ENCODE measurements at regions of chr22 and their contacts with region 1.

Region 1: GRCh38 chr22:48442663-48443062 is 1385.0 kb downstream of the BRD1 start:
- DNase-seq: no peak
- ATAC-seq: no peak
- H3K4me3 ChIP-seq: no peak overlapping the region
- H3K27ac ChIP-seq: no peak overlapping the region
- H3K4me1 ChIP-seq: no peaks in the 10 kb centered on the region
- H3K27me3 ChIP-seq: no peaks in the 10 kb centered on the region
- CTCF ChIP-seq: no peak

Region 2: DNA sequence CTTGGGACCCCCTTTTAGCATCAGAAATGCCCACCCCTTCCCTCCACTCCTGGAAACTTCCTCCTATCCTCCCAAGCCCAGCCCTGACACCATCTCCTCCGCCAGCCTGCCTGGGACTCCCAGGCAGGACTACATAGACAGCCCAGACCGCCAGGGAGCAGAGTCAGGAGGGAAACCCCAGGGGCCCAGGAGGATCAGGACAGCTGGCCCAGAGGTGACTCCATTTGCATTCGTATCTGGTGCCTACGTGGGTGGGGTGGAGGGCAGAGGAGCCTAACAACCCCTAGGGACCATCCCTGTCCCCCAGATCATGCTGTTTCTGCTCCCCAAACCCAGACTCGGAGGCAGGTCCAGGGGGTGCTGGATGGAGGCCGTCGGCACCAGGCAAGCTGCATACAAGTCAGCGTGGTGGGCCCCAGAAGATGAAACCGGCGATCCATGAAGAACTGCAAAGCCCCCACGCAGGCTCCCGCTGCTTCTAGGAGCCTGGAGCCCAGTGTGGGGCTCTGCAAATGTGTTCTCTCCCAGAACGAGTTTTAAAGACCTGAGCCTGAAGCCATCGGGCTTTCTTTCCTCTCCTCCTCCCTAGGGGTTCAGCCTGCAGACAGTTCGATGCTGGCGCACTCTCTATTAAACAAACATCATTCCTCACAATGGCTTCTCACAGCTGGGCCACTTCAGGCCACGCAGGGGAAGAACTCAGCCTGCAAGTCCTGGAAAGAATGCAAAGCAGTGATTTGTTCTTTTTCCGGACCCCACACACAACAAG is 121.8 kb before region 1 on chr22:
- CTCF ChIA-PET with region 1: no interaction called
- POLR2A ChIA-PET with region 1: no interaction called
- in situ Hi-C with region 1: no loop called
- intact Hi-C with region 1: no loop called
- DNase-seq: no peak
- ATAC-seq: no peak
- H3K4me3 ChIP-seq: no peak overlapping the region
- H3K27ac ChIP-seq: no peak overlapping the region
- H3K4me1 ChIP-seq: no peaks in the 10 kb centered on the region
- H3K27me3 ChIP-seq: no peaks in the 10 kb centered on the region
- CTCF ChIP-seq: no peak

Region 3: GRCh38 chr22:48894064-48894671 is 451.5 kb after region 1 on chr22:
- CTCF ChIA-PET with region 1: no interaction called
- POLR2A ChIA-PET with region 1: interaction called, 17 read pairs
- in situ Hi-C with region 1: no loop called
- intact Hi-C with region 1: no loop called
- DNase-seq: no peak
- ATAC-seq: no peak
- H3K4me3 ChIP-seq: no peak overlapping the region
- H3K27ac ChIP-seq: no peak overlapping the region
- H3K4me1 ChIP-seq: no peaks in the 10 kb centered on the region
- H3K27me3 ChIP-seq: no peaks in the 10 kb centered on the region
- CTCF ChIP-seq: no peak; the same call in 1 of the 2 replicates